HepG2 (cell line): ENCODE measurements at regions of chr7 and their contacts with region 1.

Region 1: DNA sequence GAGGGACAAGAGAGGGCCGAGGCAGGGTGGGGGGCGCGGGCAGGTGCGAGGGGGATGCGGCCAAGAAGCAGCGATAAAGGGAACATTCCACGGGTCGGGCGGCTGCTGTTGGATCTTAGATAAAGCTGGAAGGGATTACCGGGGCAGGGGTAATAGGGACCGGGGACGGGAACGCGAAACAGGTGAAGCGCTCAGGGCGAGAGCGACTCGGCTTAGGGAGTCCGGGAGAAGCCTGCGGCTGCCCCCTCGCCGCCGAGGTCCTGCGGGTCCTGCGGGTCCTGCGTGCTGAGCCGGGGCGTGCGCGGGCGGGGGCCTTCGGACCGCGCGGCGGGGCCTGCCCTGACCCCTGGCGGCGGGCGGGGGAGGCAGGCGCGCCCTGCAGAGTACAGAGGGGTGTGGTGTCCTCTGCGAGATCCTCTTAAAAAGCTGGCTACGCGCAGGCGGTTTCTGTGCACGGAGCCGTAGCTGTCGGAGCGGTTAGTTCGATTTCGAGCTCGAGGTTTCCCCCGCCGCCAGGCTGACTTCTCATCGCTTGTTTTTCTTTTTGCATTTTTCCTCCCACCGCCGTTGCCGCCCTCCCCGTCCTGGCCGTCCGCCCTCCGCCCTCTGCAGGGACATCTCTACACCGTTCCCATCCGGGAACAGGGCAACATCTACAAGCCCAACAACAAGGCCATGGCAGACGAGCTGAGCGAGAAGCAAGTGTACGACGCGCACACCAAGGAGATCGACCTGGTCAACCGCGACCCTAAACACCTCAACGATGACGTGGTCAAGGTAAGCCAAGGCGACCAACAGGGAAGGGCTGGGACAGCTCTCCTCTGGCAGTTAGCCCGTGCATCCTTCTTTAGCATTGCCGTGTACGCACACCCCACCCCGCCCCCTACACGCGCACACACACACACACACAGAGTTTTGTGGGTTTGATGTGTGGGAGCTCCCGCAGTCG is 1.4 kb downstream of the CAV1 start:
- DNase-seq: no peak
- ATAC-seq: peak; percentile 97
- H3K4me3 ChIP-seq: peak overlapping the region; percentile 46 to 70 (median 53); a peak in 5 of 6 replicates
- H3K27ac ChIP-seq: no peak overlapping the region
- H3K4me1 ChIP-seq: peaks cover 21% of the 10 kb centered on the region
- H3K27me3 ChIP-seq: peaks cover 9 to 44% of the 10 kb centered on the region in 2 experiments
- CTCF ChIP-seq: peak; percentile 71
- EP300 ChIP-seq: no peak
- POLR2A ChIP-seq: no peak
- RAD21 ChIP-seq: peak; percentile 80

Region 2: GRCh38 chr7:116138202-116138801 is 387.9 kb before region 1 on chr7:
- CTCF ChIA-PET with region 1: no interaction called
- POLR2A ChIA-PET with region 1: no interaction called
- in situ Hi-C with region 1: no loop called
- intact Hi-C with region 1: loop called (anchors 5 kb)
- DNase-seq: peak; percentile 52
- ATAC-seq: peak; percentile 90
- H3K4me3 ChIP-seq: no peak overlapping the region
- H3K27ac ChIP-seq: no peak overlapping the region
- H3K4me1 ChIP-seq: peaks cover 13% of the 10 kb centered on the region
- H3K27me3 ChIP-seq: 0 out of 5 replicates have a peak, but pooled peaks cover 2 to 3% of the 10 kb centered on the region in 2 experiments
- CTCF ChIP-seq: peak; percentile 81
- EP300 ChIP-seq: no peak
- POLR2A ChIP-seq: no peak
- RAD21 ChIP-seq: peak; percentile 43; the same call in 1 of the 2 replicates

Region 3: DNA sequence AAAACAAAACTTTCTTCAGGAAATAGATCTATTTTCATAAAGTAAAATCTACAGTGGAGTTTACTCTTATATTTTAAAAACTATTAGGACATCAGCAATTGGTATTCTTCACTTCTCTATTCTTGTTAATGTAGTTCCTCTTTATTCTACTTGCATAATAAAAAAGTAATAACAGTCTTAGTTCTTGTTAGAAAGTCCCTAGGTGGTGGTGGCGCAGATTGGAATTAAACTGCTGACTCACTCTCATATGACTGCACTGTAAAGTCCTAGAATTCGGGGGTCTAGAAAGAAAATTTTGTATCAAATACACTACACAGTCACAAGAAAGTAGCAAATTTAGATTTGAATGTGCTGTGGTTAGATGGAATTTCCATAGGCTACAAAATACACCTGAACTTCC is 360.5 kb before region 1 on chr7:
- CTCF ChIA-PET with region 1: no interaction called
- POLR2A ChIA-PET with region 1: no interaction called
- in situ Hi-C with region 1: loop called (anchors 10 kb)
- intact Hi-C with region 1: loop called (anchors 10 kb)
- DNase-seq: no peak
- ATAC-seq: no peak
- H3K4me3 ChIP-seq: no peak overlapping the region
- H3K27ac ChIP-seq: no peak overlapping the region
- H3K4me1 ChIP-seq: peaks cover 31% of the 10 kb centered on the region
- H3K27me3 ChIP-seq: peaks cover 4 to 23% of the 10 kb centered on the region in 2 experiments; a peak in 3 of 5 replicates
- CTCF ChIP-seq: no peak
- EP300 ChIP-seq: no peak
- POLR2A ChIP-seq: no peak
- RAD21 ChIP-seq: no peak

Region 4: DNA sequence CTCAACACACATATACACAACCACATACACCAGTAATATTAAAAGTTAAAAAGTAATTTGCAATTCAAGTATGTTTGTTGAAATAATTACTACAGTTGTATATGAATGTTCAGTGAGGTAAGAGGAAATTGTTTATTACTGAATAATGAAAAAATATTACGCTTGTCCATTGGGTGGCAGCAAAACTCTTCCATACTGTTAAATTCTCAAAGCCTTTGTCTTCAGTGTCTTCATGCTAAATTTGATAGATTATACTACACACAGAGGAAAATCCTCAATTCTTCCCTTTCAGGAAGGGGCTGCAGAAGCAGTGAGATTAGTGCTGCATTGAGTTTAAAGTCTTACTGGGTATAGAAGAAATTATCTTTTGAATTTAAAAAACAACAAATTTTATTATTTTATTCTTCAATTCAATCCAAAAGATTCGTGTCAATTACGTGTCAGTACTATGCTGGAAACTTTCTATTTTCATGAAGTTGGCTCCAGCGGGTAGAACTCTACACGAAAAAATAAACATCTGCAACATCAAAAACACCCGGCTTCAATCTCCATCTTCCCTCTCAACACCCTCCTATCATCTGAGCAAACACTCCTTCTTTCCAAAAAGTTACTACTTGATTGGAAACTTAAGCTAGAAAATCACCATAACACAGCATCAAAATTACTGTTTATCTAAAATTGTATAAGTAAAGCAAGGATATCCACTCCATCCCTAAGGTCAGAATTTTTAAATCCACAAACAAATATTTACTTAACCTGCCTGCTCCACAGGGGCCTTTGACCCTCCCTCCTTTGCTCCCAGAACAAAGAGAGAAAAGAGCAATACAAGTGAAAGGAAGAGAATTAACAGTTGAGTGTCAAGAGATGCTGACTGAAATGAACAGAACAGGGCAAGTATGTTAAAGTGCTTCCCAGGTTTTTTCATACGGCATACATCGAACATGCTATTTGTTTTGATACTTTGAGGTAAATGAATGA is 352.8 kb before region 1 on chr7:
- CTCF ChIA-PET with region 1: interaction called, 8 read pairs
- POLR2A ChIA-PET with region 1: no interaction called
- in situ Hi-C with region 1: loop called (anchors 10 kb)
- intact Hi-C with region 1: loop called (anchors 10 kb)
- DNase-seq: peak; percentile 77
- ATAC-seq: peak; percentile 57
- H3K4me3 ChIP-seq: no peak overlapping the region
- H3K27ac ChIP-seq: no peak overlapping the region
- H3K4me1 ChIP-seq: peaks cover 48% of the 10 kb centered on the region
- H3K27me3 ChIP-seq: peaks cover 0 to 28% of the 10 kb centered on the region in 2 experiments; a peak in 4 of 5 replicates
- CTCF ChIP-seq: peak; percentile 67
- EP300 ChIP-seq: peak in 1 of 2 experiments; percentile 66; a peak in 2 of 4 replicates
- POLR2A ChIP-seq: no peak
- RAD21 ChIP-seq: no peak; the same call in 1 of the 2 replicates

Region 5: DNA sequence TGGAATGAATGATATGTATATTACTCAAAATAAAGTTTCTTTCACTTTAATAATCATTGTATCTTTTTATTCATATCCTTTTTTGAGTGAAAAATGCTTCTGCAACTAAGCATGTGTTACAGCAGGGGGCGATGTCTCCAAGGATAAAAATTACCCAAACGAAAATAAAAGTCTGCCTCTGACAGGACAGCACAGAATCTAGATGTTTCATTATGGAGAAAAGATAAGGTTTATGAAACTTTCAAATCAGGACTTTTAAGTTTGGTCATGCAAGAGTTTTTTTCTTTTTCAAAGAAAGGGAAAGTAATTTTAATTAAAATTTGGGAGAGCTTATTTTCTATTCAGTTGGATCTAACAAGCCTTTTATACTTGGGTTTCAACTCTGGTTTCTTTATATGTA is 267.5 kb before region 1 on chr7:
- CTCF ChIA-PET with region 1: interaction called, 17 read pairs
- POLR2A ChIA-PET with region 1: no interaction called
- in situ Hi-C with region 1: loop called (anchors 5 kb)
- intact Hi-C with region 1: loop called (anchors 1 kb)
- DNase-seq: peak; percentile 22
- ATAC-seq: no peak
- H3K4me3 ChIP-seq: no peak overlapping the region
- H3K27ac ChIP-seq: no peak overlapping the region
- H3K4me1 ChIP-seq: no peaks in the 10 kb centered on the region
- H3K27me3 ChIP-seq: no peaks in the 10 kb centered on the region
- CTCF ChIP-seq: peak; percentile 66
- EP300 ChIP-seq: no peak
- POLR2A ChIP-seq: no peak
- RAD21 ChIP-seq: peak; percentile 57; the same call in 1 of the 2 replicates